ENCODE measurements at regions of chr2 and their contacts with region 1.

Region 1: GRCh38 chr2:172698041-172698863 is 37.4 kb upstream of the RAPGEF4 start:
- DNase-seq: no peak
- H3K4me3 Mint-ChIP-seq: no peak overlapping the region
- H3K27ac Mint-ChIP-seq: peak overlapping the region; percentile 27
- H3K4me1 Mint-ChIP-seq: peaks cover 25% of the 10 kb centered on the region
- H3K27me3 Mint-ChIP-seq: peaks cover 3% of the 10 kb centered on the region

Region 2: DNA sequence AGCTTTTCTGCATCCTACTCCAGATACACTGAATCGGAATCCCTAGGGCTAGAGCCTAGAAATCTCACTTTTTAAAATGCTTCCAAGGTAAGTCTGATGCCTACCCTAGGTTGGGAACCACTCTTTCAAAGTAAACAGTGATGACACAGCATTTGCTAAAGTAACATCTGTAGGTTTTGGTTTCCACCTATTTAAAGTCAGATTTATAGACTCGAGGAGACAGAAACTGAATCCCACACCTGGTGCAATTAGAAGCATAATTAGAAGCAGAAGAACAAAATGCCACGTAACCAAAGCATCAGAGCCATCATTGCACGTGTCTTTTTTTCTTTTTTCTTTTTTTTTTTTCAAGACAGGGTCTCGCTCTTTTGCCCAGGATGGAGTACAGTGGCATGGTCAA is 101.5 kb before region 1 on chr2:
- intact Hi-C with region 1: loop called (anchors 10 kb)
- DNase-seq: no peak
- H3K4me3 Mint-ChIP-seq: no peak overlapping the region
- H3K27ac Mint-ChIP-seq: no peak overlapping the region
- H3K4me1 Mint-ChIP-seq: no peaks in the 10 kb centered on the region
- H3K27me3 Mint-ChIP-seq: no peaks in the 10 kb centered on the region

Region 3: DNA sequence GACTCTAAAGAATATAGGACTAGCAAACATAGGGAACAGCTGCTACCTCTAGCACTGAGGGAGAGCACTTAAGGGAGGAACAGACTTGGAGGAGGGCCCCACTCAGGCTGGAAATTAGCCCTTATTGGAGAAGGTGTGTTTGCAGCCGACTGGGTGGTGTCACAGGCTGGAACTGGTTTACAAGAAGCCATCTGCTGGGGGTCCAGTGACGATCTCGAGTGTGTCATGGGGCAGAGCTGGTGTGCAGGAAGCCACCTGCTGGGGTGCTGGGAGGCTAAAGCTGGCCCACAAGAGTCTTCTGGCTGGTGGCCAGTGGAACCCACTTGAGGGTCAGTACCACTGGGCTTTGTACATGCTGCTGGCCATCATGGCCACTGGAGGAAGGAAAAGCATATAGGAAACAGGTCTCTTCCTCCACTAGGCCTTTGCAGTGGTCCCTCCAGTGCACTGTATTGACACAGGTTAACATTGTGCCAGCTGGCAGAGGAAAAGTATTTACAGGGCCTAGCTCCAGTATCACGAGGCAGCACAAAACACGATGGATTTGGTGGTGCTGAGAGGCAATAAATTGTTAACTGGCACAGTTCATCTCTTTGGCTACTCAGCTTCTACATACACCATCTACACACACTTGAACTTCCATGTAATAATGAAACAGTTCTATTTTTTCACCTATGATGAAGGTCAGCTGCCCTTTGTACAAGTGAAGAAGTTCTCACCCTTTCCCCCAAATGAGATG is 421.0 kb after region 1 on chr2:
- intact Hi-C with region 1: no loop called
- DNase-seq: no peak
- H3K4me3 Mint-ChIP-seq: no peak overlapping the region
- H3K27ac Mint-ChIP-seq: peak overlapping the region; percentile 37
- H3K4me1 Mint-ChIP-seq: peaks cover 23% of the 10 kb centered on the region
- H3K27me3 Mint-ChIP-seq: peaks cover 2% of the 10 kb centered on the region

Measured in activated T-helper 1 cell treated with anti-CD3 and anti-CD28 coated beads, Interleukin-12 subunit alpha, Interleukin-12 subunit beta, Interleukin-2, Interleukin-4 antibody, amounts not matched to agents 30 ng/mL and 10 ng/mL and 1 ng/mL, durations not matched to agents 14 hours and 24 hours and 36 hours (primary cell).